ENCODE measurements at regions of chr16 and their contacts with region 1.

Region 1: DNA sequence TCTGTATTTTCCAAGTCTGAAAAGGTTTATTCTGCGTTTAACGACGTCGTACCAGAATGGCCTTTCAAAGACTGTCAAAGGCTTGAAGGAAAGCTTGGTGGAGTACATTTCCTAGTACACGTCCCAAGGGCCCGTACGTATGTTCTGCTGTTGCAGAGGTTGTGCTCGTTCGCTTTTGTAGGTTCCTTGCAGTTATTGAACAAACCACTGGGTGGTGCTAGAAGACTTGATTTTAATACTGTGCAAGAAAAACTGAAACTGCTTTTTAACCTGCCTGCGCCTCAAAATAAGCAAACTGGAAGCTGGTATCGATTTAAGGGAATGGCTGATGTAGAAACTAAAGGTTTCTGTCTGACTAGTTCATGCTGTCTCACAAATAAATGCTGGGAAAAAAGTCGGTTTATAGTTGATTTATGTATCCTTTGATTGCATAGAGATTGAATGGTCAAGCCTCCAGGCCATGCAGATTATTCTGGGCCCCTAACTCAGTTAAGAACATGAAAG is 54.6 kb downstream of the USP10 start:
- DNase-seq: peak; percentile 84
- H3K4me3 ChIP-seq: no peak overlapping the region
- H3K27ac ChIP-seq: peak overlapping the region; percentile 32 to 72
- H3K4me1 ChIP-seq: no peaks in the 10 kb centered on the region
- H3K27me3 ChIP-seq: no peaks in the 10 kb centered on the region
- CTCF ChIP-seq: peak; percentile 33 to 93 (median 90)
- POLR2A ChIP-seq: no peak

Region 2: GRCh38 chr16:84819644-84820324 is 65.4 kb after region 1 on chr16 and contains the start of gene CRISPLD2:
- intact Hi-C with region 1: loop called (anchors 5 kb)
- DNase-seq: peak; percentile 93
- H3K4me3 ChIP-seq: peak within 1 kb of the TSS; percentile 48 to 49
- H3K27ac ChIP-seq: peak within 1 kb of the TSS; percentile 85
- H3K4me1 ChIP-seq: peaks cover 3% of the 10 kb centered on the region
- H3K27me3 ChIP-seq: no peaks in the 10 kb centered on the region
- CTCF ChIP-seq: no peak
- POLR2A ChIP-seq: peak; percentile 91
- total RNA-seq, gene CRISPLD2: 186 to 226 TPM

Region 3: DNA sequence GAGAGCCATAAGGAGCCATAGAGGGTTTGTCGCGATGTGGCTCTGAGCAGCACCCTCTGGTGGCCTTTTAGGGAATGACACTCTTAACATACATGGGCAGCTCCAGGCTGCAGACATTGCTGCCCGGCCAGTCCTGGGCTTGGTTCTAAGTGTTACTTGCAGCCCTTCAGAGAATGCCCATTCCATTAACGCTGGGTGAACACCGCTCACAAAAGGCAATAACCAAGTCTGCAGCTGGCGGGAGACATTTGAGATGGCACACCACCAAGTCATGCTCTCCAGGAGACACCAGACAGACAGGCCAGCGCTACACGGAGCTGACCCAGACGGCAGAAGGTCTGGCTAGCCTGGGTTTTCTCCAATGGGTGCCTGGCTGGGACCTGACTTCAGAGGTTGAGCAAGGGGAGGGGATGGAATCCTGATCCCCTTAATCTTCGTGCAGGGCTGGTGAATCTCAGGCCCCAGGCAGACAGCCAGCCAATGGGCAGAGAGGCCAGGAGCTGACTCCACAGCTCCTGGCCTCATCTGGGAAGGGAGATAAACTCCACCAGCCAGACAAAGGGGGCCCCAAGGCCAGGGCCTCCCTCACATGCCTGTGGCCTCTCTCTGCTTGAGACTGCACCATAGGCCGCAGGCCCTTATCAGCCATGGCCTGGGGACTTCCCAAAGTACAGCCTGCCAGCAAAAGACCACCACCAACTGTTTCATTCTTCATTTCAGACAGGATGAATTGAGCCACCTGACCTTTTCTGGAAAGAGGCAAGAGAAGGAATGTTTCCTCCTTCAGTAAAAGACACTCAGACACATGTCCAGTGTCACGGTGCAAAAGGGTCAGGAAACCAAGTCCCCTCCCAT is 198.2 kb after region 1 on chr16:
- intact Hi-C with region 1: loop called (anchors 1 kb)
- DNase-seq: peak; percentile 84
- H3K4me3 ChIP-seq: no peak overlapping the region
- H3K27ac ChIP-seq: peak overlapping the region; percentile 29 to 43
- H3K4me1 ChIP-seq: peaks cover 7% of the 10 kb centered on the region
- H3K27me3 ChIP-seq: no peaks in the 10 kb centered on the region
- CTCF ChIP-seq: peak; percentile 90 to 96 (median 92)
- POLR2A ChIP-seq: no peak

Region 4: DNA sequence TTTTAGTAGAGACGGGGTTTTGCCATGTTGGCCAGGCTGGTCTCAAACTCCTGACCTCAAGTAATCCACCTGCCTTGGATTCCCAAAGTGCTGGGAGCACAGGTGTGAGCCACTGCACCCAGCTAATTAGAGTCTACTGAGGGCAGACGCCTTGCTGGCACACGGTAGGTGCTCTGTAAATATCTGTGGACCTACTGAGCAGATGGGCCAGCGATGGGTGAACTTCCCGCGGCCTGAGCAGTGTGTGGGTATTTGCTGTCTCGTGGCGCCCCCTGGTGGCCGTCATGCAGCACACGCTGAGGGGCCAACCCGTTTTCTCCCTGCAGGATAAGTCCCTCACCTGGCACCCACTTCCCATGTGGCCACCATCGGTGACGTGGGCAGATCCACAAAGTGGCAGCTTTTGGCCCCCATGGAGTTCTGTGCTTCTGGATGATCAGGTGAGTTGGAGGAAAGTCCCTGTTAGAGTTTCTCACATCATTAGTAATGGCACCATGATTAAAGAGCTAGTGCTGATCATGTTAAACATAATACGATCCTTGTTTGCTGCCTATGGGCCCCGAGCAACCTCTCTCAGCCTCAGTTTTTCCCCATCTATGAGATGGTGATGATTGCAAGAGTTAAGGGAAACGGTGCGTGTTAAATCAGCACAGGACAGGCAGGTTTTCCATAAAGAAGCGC is 216.2 kb after region 1 on chr16:
- intact Hi-C with region 1: loop called (anchors 2 kb)
- DNase-seq: peak; percentile 68
- H3K4me3 ChIP-seq: no peak overlapping the region
- H3K27ac ChIP-seq: no peak overlapping the region
- H3K4me1 ChIP-seq: peaks cover 3% of the 10 kb centered on the region
- H3K27me3 ChIP-seq: no peaks in the 10 kb centered on the region
- CTCF ChIP-seq: peak; percentile 92 to 98 (median 96)
- POLR2A ChIP-seq: no peak